GM18951 (cell line): ENCODE measurements at regions of chr2 and their contacts with region 1.

Region 1: DNA sequence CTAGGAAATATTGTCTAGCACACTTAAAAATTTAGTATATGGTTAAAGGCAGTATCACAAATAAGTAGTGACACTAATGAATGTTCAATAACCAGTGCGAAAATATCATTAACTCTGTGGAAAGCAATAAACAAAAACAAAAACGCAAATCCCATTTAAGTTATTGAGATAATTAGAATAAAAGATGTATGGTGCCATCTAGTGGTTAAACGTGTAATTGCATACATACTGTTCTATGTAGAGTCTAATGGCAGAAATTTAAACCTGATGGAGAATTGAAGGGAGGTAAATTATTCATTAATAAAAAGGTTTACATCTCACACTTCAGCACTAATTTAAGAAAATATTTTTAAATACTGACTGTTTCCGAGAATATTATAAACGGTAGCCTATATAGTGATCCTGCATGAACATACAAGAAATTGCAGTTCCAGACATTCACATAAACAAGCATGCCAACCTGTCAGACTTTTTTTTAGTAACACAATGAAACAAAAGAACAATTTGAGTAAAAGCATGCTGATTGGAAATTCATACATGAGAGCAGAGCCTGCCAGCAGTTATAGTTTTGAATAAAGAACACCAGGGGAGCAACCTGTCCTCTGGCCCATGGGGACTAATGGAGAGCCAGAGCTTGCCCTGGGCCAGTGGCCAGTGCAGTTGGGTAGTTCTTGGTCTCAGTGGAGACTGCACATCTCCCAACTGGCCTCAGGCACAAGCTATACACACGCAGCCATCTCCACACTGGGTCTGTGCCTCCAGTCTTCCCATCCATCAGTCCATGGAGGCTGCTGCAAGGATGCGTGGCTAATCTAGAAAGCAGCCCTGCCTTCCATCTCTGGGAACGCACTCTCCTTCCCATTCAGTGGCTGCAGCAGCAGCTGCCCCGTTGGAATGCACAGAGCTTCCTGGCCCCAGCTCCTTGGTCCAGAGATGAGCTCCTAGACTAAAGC is 28.0 kb downstream of the GCG start:
- POLR2A ChIP-seq: no peak

Region 2: GRCh38 chr2:161112908-161113307 is 1011.2 kb before region 1 on chr2:
- in situ Hi-C with region 1: no loop called
- POLR2A ChIP-seq: no peak

Region 3: DNA sequence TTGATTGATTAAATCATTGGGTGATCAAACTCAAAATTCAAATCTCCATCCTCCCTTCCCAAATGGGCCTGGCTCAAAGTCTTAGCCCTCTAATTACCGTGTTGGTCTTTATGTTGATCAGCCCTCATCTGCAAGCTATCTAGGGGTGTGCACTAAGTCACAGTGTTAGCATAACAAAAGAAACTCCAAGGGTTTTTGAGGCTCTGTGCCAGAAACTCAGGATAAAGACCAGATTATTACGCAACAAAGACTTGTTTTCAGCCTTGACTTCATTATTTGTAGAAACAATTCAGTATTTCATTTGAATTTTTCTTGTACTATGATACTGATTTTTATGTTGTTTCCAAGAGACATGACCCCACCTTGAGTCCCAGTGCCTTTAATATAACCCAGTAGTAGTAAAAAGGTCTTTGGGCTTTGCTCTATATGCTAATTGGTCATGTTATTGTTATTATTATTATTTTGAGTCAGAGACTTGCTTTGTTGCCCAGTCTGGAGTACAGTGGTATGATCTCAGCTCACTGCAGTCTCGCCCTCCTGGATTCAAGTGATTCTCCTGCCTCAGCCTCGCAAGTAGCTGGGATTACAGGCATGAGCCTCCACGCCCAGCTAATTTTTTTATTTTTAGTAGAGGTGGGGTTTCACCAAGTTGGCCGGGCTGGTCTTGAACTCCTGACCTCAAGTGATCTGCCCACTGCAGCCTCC is 802.0 kb before region 1 on chr2:
- in situ Hi-C with region 1: no loop called
- POLR2A ChIP-seq: no peak

Region 4: DNA sequence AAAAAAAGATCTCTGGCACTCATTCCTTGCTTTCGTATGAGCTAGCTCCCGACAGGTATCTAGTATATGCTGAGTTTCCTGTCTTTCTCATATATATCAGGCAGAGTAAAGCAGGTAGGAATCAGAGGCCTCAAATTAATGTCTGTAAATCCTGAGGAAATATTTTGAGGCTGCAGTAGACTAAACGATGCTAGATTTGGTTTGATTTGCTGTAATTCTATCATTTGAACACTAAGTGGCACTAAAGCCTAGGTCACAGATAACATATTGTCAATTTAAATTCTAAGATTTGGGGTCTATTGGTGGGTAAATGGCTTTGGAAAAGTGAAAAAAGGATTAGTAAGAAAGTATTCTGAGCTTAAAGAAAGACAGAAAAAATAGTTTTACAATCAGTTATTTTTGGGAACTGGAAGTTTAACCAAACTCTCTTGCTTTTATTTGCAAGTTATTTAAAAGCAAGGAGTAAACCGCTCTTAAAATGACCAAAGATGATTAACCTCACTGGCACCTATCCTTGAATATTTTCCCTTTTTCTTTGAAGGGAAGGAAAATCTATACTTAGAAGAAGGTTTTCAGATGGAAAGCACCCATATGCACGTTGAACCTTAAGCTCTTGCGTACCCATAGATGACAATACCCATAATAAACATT is 537.4 kb before region 1 on chr2:
- in situ Hi-C with region 1: loop called (anchors 25 kb)
- POLR2A ChIP-seq: no peak

Region 5: GRCh38 chr2:162007447-162008040 is 116.5 kb before region 1 on chr2:
- in situ Hi-C with region 1: loop called (anchors 10 kb)
- POLR2A ChIP-seq: no peak

Region 6: DNA sequence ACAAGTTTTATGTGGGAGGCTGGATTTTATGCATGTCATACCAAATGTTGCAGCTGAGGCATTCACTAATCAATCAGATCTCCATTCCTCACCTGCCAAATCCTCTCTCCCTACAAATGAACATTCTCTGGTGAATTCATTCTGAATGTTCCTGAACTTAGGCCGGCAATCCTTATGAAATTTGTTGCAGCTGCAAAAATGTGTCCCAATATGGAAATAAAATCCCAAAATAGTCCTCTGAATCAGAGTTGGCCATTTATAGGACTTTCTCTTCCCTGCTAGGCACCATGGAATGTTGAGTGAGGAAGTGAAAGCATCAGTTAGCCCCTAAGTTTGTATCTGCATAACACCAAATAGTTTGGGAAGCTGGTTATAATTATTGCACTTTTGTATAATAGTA is 245.5 kb after region 1 on chr2:
- in situ Hi-C with region 1: no loop called
- POLR2A ChIP-seq: no peak

Region 7: DNA sequence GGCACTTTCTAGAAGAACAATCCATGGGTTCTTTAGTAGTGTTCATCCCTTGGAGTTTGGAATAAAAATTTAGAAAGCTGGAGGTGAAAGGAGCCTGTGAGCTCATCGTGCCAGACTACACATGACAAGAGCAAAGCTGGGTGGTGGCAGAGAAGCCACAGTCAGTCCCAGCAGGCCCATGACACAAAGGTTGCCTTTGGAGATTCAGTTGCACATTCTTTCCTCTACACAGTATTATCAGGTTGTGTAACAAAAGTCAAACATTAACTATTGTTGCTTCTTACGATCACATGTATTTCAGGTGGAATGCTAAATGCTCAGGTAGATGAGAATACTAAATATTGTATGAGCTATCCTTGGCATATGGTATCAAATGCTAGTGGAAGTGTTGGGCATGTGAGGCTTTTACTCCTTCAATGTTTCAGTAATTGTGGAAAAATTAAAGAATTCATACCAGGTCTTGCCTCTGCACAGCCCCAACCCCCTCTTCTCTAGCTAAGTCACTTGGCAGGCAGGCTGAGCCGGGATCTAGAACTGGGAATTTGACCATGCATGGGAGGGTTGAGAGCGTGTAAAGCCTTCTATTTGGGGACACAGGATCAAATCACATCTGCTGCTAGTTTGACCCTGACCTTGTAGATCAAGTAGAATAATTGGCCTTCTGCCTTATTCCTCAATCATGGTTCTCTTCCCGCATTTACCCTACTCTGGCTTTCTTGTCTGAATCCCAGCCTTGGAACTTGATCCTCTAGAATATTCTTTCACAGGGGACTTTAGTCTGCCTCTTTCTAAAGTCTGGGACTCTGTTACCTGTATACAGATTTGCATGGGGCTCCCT is 450.8 kb after region 1 on chr2:
- in situ Hi-C with region 1: no loop called
- POLR2A ChIP-seq: no peak